ENCODE measurements at regions of chr14 and their contacts with region 1.

Region 1: GRCh38 chr14:74362361-74362915 is 14.2 kb downstream of the VRTN start:
- DNase-seq: peak; percentile 68
- ATAC-seq: peak; percentile 100
- H3K4me3 ChIP-seq: no peak overlapping the region
- H3K27ac ChIP-seq: no peak overlapping the region
- H3K4me1 ChIP-seq: no peaks in the 10 kb centered on the region
- H3K27me3 ChIP-seq: peaks cover 48% of the 10 kb centered on the region
- CTCF ChIP-seq: peak; percentile 95
- POLR2A ChIP-seq: no peak
- RAD21 ChIP-seq: peak; percentile 90

Region 2: DNA sequence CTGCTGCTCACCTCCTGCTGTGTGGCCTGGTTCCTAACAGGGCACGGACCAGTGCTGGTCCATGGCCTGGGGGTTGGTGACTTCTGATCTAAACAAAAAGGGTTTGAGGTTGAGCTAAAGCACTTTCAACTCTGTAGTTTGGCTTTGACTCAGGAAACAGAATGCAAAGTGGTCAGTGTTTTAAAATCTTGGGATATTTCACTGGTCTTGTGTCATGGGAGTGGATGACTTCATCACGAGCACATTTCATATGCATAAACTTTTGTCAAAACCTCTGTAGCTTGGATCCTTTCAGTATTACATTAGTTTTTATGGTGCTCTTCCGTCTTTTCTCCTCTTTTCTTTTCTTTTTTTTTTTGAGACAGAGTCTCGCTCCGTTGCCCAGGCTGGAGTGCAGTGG is 438.1 kb before region 1 on chr14:
- CTCF ChIA-PET with region 1: no interaction called
- POLR2A ChIA-PET with region 1: no interaction called
- dilution Hi-C with region 1: no loop called
- in situ Hi-C with region 1: no loop called
- intact Hi-C with region 1: no loop called
- DNase-seq: peak; percentile 81
- ATAC-seq: peak; percentile 83
- H3K4me3 ChIP-seq: no peak overlapping the region
- H3K27ac ChIP-seq: peak overlapping the region; percentile 49; the same call in 1 of the 2 replicates
- H3K4me1 ChIP-seq: peaks cover 4% of the 10 kb centered on the region
- H3K27me3 ChIP-seq: no peaks in the 10 kb centered on the region
- CTCF ChIP-seq: no peak
- POLR2A ChIP-seq: no peak
- RAD21 ChIP-seq: no peak

Region 3: GRCh38 chr14:74478996-74479635 is 116.7 kb after region 1 on chr14:
- CTCF ChIA-PET with region 1: interaction called, 3 read pairs
- POLR2A ChIA-PET with region 1: no interaction called
- dilution Hi-C with region 1: no loop called
- in situ Hi-C with region 1: loop called (anchors 5 kb)
- intact Hi-C with region 1: loop called (anchors 1 kb)
- DNase-seq: peak; percentile 42
- ATAC-seq: peak; percentile 53
- H3K4me3 ChIP-seq: no peak overlapping the region
- H3K27ac ChIP-seq: no peak overlapping the region
- H3K4me1 ChIP-seq: peaks cover 11% of the 10 kb centered on the region
- H3K27me3 ChIP-seq: no peaks in the 10 kb centered on the region
- CTCF ChIP-seq: peak; percentile 93
- POLR2A ChIP-seq: no peak
- RAD21 ChIP-seq: peak; percentile 95

Region 4: GRCh38 chr14:74493343-74494261 is 131.2 kb after region 1 on chr14 and contains the start of gene ISCA2:
- CTCF ChIA-PET with region 1: interaction called, 3 read pairs
- POLR2A ChIA-PET with region 1: no interaction called
- dilution Hi-C with region 1: no loop called
- in situ Hi-C with region 1: no loop called
- intact Hi-C with region 1: loop called (anchors 1 kb)
- DNase-seq: peak; percentile 99
- ATAC-seq: peak; percentile 93
- H3K4me3 ChIP-seq: peak within 1 kb of the TSS; percentile 93
- H3K27ac ChIP-seq: peak within 1 kb of the TSS; percentile 72
- H3K4me1 ChIP-seq: peaks cover 7% of the 10 kb centered on the region
- H3K27me3 ChIP-seq: no peaks in the 10 kb centered on the region
- CTCF ChIP-seq: no peak
- POLR2A ChIP-seq: peak; percentile 63; the same call in 1 of the 2 replicates
- RAD21 ChIP-seq: no peak
- total RNA-seq, gene ISCA2: 5.4 and 9.2 TPM in 2 replicates

Region 5: DNA sequence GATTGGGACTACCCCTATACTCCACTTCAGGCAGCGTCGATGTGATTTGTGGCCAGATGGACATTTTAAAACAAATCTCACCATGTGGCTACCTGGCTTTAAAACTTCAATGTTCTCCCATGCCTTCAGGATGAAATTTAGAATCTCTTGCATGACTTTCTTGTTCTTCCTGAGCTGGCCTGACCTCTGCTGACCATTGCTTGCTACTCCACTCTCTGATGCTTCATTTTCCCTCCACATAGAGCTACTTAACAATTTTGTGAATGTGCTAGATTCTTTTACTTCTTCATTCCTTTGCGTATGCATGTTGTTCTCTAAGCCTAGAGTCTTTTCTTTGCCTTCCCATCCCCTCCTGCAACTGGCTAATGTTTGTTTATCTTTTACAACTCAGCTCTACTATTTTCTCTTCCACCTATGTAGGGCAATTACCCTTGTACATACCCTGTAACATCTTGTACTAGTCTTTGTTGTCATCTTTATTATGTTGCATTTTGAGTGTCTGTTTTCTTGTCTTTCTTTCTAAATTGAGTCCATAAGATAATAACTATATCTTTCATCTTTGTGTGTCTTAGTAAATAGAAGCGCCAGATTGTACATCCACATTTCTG is 441.9 kb after region 1 on chr14:
- CTCF ChIA-PET with region 1: no interaction called
- POLR2A ChIA-PET with region 1: no interaction called
- dilution Hi-C with region 1: no loop called
- in situ Hi-C with region 1: no loop called
- intact Hi-C with region 1: loop called (anchors 10 kb)
- DNase-seq: peak; percentile 70
- ATAC-seq: peak; percentile 94
- H3K4me3 ChIP-seq: no peak overlapping the region
- H3K27ac ChIP-seq: no peak overlapping the region
- H3K4me1 ChIP-seq: no peaks in the 10 kb centered on the region
- H3K27me3 ChIP-seq: no peaks in the 10 kb centered on the region
- CTCF ChIP-seq: peak; percentile 73
- POLR2A ChIP-seq: no peak
- RAD21 ChIP-seq: peak; percentile 81

Measured in IMR-90 (cell line).